ENCODE measurements at regions of chr1 and their contacts with region 1.

Region 1: GRCh38 chr1:67535474-67535873 is 105.3 kb upstream of the SERBP1 start:
- DNase-seq: peak; percentile 84 to 89
- H3K4me3 ChIP-seq: no peak overlapping the region
- H3K27ac ChIP-seq: no peak overlapping the region
- H3K4me1 ChIP-seq: peaks cover 0 to 19% (median 11%) of the 10 kb centered on the region in 4 donors
- H3K27me3 ChIP-seq: no peaks in the 10 kb centered on the region
- CTCF ChIP-seq: peak; percentile 96 to 98

Region 2: DNA sequence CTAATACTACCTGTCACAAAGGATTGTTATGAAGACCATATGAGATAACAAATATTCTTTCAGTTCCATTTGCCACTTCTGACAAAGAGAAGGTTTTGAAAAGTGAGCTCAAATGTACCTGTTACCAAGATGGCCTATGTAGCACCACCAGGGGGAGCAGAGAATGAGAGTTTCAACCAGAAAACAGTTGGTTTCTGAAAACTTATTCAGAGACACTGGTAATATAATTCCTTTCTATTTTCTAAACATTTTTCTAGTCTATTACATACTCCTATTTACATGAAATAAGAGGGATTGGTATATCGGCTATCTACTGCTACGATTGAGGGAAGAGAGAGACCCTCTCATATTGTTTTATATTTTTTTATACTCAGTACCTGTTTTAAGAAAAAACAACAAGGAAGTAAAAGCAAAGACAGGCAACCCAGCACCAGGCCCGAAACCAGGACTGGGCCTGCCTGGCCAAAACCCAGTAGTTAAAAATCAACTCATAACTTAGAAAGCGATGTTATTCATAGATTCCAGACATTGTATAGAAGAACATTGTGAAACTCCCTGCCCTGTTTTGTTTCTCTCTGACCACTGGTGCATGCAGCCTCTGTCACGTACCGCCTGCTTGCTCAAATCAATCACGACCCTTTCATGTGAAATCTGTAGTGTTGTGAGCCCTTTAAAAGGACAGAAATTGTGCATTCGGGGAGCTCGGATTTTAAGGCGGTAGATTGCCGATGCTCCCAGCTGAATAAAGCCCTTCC is 320.9 kb before region 1 on chr1:
- intact Hi-C with region 1: no loop called
- DNase-seq: no peak
- H3K4me3 ChIP-seq: no peak overlapping the region
- H3K27ac ChIP-seq: no peak overlapping the region
- H3K4me1 ChIP-seq: peaks cover 0 to 7% (median 0%) of the 10 kb centered on the region in 4 donors
- H3K27me3 ChIP-seq: no peaks in the 10 kb centered on the region
- CTCF ChIP-seq: peak; percentile 35 to 37

Region 3: GRCh38 chr1:67599085-67599484 is 63.6 kb after region 1 on chr1:
- intact Hi-C with region 1: no loop called
- DNase-seq: no peak
- H3K4me3 ChIP-seq: no peak overlapping the region
- H3K27ac ChIP-seq: peak overlapping the region in 1 of 2 donors; percentile 21
- H3K4me1 ChIP-seq: peaks cover 0 to 5% (median 2%) of the 10 kb centered on the region in 4 donors
- H3K27me3 ChIP-seq: no peaks in the 10 kb centered on the region
- CTCF ChIP-seq: no peak

Region 4: GRCh38 chr1:67832737-67833601 is 297.5 kb after region 1 on chr1 and contains the start of gene GNG12:
- intact Hi-C with region 1: loop called (anchors 10 kb)
- DNase-seq: peak; percentile 78 to 89
- H3K4me3 ChIP-seq: peak within 1 kb of the TSS; percentile 87 to 89
- H3K27ac ChIP-seq: peak within 1 kb of the TSS; percentile 96 to 98
- H3K4me1 ChIP-seq: peaks cover 0 to 49% (median 20%) of the 10 kb centered on the region in 4 donors
- H3K27me3 ChIP-seq: no peaks in the 10 kb centered on the region
- CTCF ChIP-seq: no peak